ENCODE measurements at regions of chr10 and their contacts with region 1.

Region 1: GRCh38 chr10:23568996-23569395 is 130.1 kb downstream of the OTUD1 start:
- DNase-seq: no peak
- ATAC-seq: no peak
- H3K4me3 ChIP-seq: no peak overlapping the region
- H3K27ac ChIP-seq: no peak overlapping the region
- H3K4me1 ChIP-seq: no peaks in the 10 kb centered on the region
- H3K27me3 ChIP-seq: no peaks in the 10 kb centered on the region; a peak in 1 of 5 replicates
- CTCF ChIP-seq: no peak
- EP300 ChIP-seq: no peak
- POLR2A ChIP-seq: no peak
- RAD21 ChIP-seq: no peak

Region 2: DNA sequence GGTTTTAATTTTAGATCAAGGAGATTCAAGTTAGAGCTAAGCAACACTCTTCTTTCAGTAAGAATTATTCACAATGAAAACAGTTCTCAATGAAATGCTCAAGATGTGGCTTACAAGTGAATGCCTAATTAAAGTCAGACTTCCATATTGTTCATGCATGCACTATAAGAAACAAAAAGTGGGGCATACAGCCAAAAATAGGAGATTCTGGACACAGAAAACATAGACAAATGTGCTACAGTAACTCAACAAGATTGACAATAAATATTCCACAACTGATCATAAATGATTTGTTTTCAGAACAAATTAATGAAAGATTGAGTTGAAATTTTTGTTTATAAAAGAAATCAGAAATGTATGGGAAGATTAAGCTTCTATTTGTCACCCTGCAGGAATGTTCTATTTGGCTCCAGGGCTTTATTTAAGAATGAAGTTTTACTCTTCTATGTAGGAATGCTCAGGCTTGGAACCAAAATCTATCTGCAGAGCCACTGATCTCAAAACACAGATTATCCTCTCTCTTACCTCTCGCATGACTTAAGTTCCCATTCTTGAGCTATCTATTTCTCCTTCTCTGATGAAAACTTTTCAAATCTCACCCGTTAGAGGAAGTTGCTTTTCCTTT is 765.6 kb before region 1 on chr10:
- CTCF ChIA-PET with region 1: no interaction called
- POLR2A ChIA-PET with region 1: no interaction called
- in situ Hi-C with region 1: no loop called
- intact Hi-C with region 1: loop called (anchors 5 kb)
- DNase-seq: no peak
- ATAC-seq: no peak
- H3K4me3 ChIP-seq: no peak overlapping the region
- H3K27ac ChIP-seq: no peak overlapping the region
- H3K4me1 ChIP-seq: no peaks in the 10 kb centered on the region
- H3K27me3 ChIP-seq: peaks cover 0 to 1% of the 10 kb centered on the region in 2 experiments; a peak in 1 of 5 replicates
- CTCF ChIP-seq: no peak
- EP300 ChIP-seq: no peak
- POLR2A ChIP-seq: no peak
- RAD21 ChIP-seq: no peak